ENCODE measurements at regions of chr17 and their contacts with region 1.

Region 1: DNA sequence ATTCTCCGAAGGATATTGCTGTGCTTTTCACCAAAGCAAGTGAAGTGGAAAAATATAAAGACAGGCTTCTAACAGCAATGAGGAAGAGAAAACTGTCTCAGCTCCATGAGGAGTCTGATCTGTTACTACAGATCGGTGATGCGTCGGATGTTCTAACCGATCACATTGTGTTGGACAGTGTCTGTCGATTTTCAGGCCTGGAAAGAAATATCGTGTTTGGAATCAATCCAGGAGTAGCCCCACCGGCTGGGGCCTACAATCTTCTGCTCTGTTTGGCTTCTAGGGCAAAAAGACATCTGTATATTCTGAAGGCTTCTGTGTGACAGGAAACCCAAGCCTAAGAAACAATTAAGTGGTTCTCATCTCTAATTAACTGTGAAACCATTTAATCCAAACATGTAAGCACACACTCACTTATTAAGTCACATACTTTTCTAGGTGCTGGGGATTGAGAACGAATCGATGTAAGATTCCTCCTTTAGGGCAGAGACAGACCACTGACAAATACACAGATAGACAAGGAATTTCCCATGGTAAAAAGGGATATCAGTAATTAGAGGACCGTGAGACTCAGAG is 22.8 kb downstream of the SLFN5 start:
- DNase-seq: no peak
- ATAC-seq: no peak
- H3K4me3 ChIP-seq: no peak overlapping the region
- H3K27ac ChIP-seq: no peak overlapping the region
- H3K4me1 ChIP-seq: no peaks in the 10 kb centered on the region
- H3K27me3 ChIP-seq: no peaks in the 10 kb centered on the region

Region 2: GRCh38 chr17:35214631-35215273 is 50.9 kb before region 1 on chr17:
- intact Hi-C with region 1: loop called in 1 of 4 experiments (anchors 10 kb)
- DNase-seq: no peak
- ATAC-seq: no peak
- H3K4me3 ChIP-seq: no peak overlapping the region
- H3K27ac ChIP-seq: peak overlapping the region; percentile 31
- H3K4me1 ChIP-seq: no peaks in the 10 kb centered on the region
- H3K27me3 ChIP-seq: no peaks in the 10 kb centered on the region

Measured in right cardiac atrium (tissue), 5 donors.